Activated naive CD4-positive, alpha-beta T cell treated with anti-CD3 and anti-CD28 coated beads, Interleukin-2, amount 10 ng/mL, durations not matched to agents 7 days and 5 days (primary cell): ENCODE measurements at regions of chr17 and their contacts with region 1.

Region 1: GRCh38 chr17:76467366-76467765 is at the start of gene AANAT:
- DNase-seq: no peak
- H3K4me3 Mint-ChIP-seq: no peak within 1 kb of the TSS
- H3K27ac Mint-ChIP-seq: no peak within 1 kb of the TSS
- H3K4me1 Mint-ChIP-seq: peaks cover 6% of the 10 kb centered on the region
- H3K27me3 Mint-ChIP-seq: peaks cover 19% of the 10 kb centered on the region

Region 2: GRCh38 chr17:76492989-76493501 is 25.7 kb after region 1 on chr17:
- CTCF ChIA-PET with region 1: interaction called, 10 read pairs
- DNase-seq: peak; percentile 70
- H3K4me3 Mint-ChIP-seq: peak overlapping the region; percentile 66
- H3K27ac Mint-ChIP-seq: peak overlapping the region; percentile 90
- H3K4me1 Mint-ChIP-seq: peaks cover 82% of the 10 kb centered on the region
- H3K27me3 Mint-ChIP-seq: no peaks in the 10 kb centered on the region

Region 3: DNA sequence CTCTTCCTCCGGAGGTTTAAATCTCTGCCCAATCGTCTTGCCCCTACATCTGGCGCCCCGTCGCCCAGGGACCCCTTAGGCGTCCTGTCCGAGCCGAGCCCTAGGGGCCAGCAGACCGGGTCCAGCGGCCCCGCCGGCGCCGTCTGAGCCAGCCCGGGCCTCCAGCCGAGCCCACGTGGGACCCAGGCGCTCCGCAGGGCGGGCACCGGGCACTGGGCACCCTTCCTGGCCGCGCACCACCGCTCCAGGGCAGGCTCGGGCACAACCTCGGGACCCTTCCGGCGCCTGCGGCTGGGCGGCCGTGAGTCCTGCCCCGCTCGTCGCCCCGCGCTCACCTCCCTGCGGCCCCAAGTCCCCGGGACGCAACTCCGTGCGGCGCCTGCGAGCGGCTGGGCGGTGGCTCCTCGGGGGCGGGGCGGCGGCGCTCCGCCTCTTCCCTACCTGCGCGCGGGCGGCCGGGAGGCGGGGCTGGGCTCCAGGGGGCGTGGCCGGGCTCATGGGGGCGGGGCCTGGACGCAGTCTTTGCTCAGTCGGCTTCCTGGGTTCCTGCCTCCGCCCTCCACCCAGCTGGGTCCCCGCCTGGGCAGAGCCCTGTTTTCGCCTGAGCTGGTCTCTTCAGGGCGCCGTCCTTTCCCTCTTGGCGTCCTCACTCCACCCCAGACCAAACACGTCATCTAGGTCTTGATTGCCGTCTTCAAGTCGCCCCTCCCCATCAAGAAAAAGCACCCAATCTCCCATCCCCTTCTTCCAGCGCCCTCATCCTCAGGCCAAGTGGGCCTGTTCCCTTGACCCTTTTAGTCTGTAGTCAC is 33.9 kb after region 1 on chr17 and contains the start of gene RHBDF2:
- CTCF ChIA-PET with region 1: interaction called, 21 read pairs
- DNase-seq: peak; percentile 97
- H3K4me3 Mint-ChIP-seq: peak within 1 kb of the TSS; percentile 84
- H3K27ac Mint-ChIP-seq: peak within 1 kb of the TSS; percentile 93
- H3K4me1 Mint-ChIP-seq: peaks cover 65% of the 10 kb centered on the region
- H3K27me3 Mint-ChIP-seq: peaks cover 7% of the 10 kb centered on the region